Motor neuron (in vitro differentiated cells): ENCODE measurements at regions of chr7 and their contacts with region 1.

Region 1: GRCh38 chr7:151315038-151315655 is 26.5 kb upstream of the NUB1 start:
- ATAC-seq: peak; percentile 61 to 89 (median 76)
- H3K4me3 ChIP-seq: no peak overlapping the region
- H3K27ac ChIP-seq: no peak overlapping the region
- H3K4me1 ChIP-seq: no peaks in the 10 kb centered on the region

Region 2: GRCh38 chr7:151448261-151449252 is 133.4 kb after region 1 on chr7:
- in situ Hi-C with region 1: loop called in 1 of 9 experiments (anchors 25 kb)
- ATAC-seq: peak; percentile 72 to 94 (median 79)
- H3K4me3 ChIP-seq: peak overlapping the region in 2 of 5 donors; percentile 11 to 16
- H3K27ac ChIP-seq: no peak overlapping the region
- H3K4me1 ChIP-seq: peaks cover 12% of the 10 kb centered on the region in 2 donors

Region 3: GRCh38 chr7:151759591-151760042 is 444.5 kb after region 1 on chr7:
- in situ Hi-C with region 1: loop called in 1 of 9 experiments (anchors 25 kb)
- ATAC-seq: peak; percentile 7 to 85 (median 62)
- H3K4me3 ChIP-seq: no peak overlapping the region
- H3K27ac ChIP-seq: no peak overlapping the region
- H3K4me1 ChIP-seq: peaks cover 42 to 46% of the 10 kb centered on the region in 2 donors

Region 4: GRCh38 chr7:152035817-152036216 is 720.7 kb after region 1 on chr7:
- in situ Hi-C with region 1: no loop called
- ATAC-seq: no peak
- H3K4me3 ChIP-seq: peak overlapping the region in 1 of 5 donors; percentile 30
- H3K27ac ChIP-seq: no peak overlapping the region
- H3K4me1 ChIP-seq: no peaks in the 10 kb centered on the region